Caco-2 (cell line): ENCODE measurements at regions of chr6 and their contacts with region 1.

Region 1: GRCh38 chr6:132715204-132715603 is 1.3 kb upstream of the VNN1 start:
- DNase-seq: peak; percentile 73 to 81
- H3K4me3 ChIP-seq: no peak overlapping the region
- H3K4me3 Mint-ChIP-seq: no peak overlapping the region
- H3K27ac Mint-ChIP-seq: no peak overlapping the region
- H3K4me1 ChIP-seq: peaks cover 9% of the 10 kb centered on the region
- H3K4me1 Mint-ChIP-seq: no peaks in the 10 kb centered on the region
- H3K27me3 ChIP-seq: no peaks in the 10 kb centered on the region
- H3K27me3 Mint-ChIP-seq: no peaks in the 10 kb centered on the region
- CTCF ChIP-seq: peak; percentile 53 to 70

Region 2: GRCh38 chr6:132161283-132161682 is 553.9 kb before region 1 on chr6:
- CTCF ChIA-PET with region 1: no interaction called
- POLR2A ChIA-PET with region 1: no interaction called
- intact Hi-C with region 1: no loop called
- DNase-seq: peak in 1 of 2 experiments; percentile 45
- H3K4me3 ChIP-seq: no peak overlapping the region
- H3K4me3 Mint-ChIP-seq: no peak overlapping the region
- H3K27ac Mint-ChIP-seq: no peak overlapping the region
- H3K4me1 ChIP-seq: no peaks in the 10 kb centered on the region
- H3K4me1 Mint-ChIP-seq: no peaks in the 10 kb centered on the region
- H3K27me3 ChIP-seq: no peaks in the 10 kb centered on the region
- H3K27me3 Mint-ChIP-seq: no peaks in the 10 kb centered on the region
- CTCF ChIP-seq: peak; percentile 47 to 65

Region 3: GRCh38 chr6:132598473-132598872 is 116.7 kb before region 1 on chr6:
- CTCF ChIA-PET with region 1: interaction called, 5 read pairs
- POLR2A ChIA-PET with region 1: no interaction called
- intact Hi-C with region 1: loop called (anchors 5 kb)
- DNase-seq: peak; percentile 56 to 59
- H3K4me3 ChIP-seq: no peak overlapping the region
- H3K4me3 Mint-ChIP-seq: no peak overlapping the region
- H3K27ac Mint-ChIP-seq: no peak overlapping the region
- H3K4me1 ChIP-seq: peaks cover 6% of the 10 kb centered on the region; the same call in 1 of the 2 replicates
- H3K4me1 Mint-ChIP-seq: peaks cover 7% of the 10 kb centered on the region
- H3K27me3 ChIP-seq: no peaks in the 10 kb centered on the region
- H3K27me3 Mint-ChIP-seq: no peaks in the 10 kb centered on the region
- CTCF ChIP-seq: peak; percentile 35 to 38

Region 4: GRCh38 chr6:132768051-132768517 is 52.9 kb after region 1 on chr6:
- CTCF ChIA-PET with region 1: no interaction called
- POLR2A ChIA-PET with region 1: no interaction called
- intact Hi-C with region 1: loop called (anchors 5 kb)
- DNase-seq: peak; percentile 42 to 44
- H3K4me3 ChIP-seq: no peak overlapping the region
- H3K4me3 Mint-ChIP-seq: no peak overlapping the region
- H3K27ac Mint-ChIP-seq: no peak overlapping the region
- H3K4me1 ChIP-seq: no peaks in the 10 kb centered on the region
- H3K4me1 Mint-ChIP-seq: no peaks in the 10 kb centered on the region
- H3K27me3 ChIP-seq: no peaks in the 10 kb centered on the region
- H3K27me3 Mint-ChIP-seq: no peaks in the 10 kb centered on the region
- CTCF ChIP-seq: peak; percentile 22 to 55